Heart right ventricle (tissue), 16 donors: ENCODE measurements at regions of chr6 and their contacts with region 1.

Region 1: DNA sequence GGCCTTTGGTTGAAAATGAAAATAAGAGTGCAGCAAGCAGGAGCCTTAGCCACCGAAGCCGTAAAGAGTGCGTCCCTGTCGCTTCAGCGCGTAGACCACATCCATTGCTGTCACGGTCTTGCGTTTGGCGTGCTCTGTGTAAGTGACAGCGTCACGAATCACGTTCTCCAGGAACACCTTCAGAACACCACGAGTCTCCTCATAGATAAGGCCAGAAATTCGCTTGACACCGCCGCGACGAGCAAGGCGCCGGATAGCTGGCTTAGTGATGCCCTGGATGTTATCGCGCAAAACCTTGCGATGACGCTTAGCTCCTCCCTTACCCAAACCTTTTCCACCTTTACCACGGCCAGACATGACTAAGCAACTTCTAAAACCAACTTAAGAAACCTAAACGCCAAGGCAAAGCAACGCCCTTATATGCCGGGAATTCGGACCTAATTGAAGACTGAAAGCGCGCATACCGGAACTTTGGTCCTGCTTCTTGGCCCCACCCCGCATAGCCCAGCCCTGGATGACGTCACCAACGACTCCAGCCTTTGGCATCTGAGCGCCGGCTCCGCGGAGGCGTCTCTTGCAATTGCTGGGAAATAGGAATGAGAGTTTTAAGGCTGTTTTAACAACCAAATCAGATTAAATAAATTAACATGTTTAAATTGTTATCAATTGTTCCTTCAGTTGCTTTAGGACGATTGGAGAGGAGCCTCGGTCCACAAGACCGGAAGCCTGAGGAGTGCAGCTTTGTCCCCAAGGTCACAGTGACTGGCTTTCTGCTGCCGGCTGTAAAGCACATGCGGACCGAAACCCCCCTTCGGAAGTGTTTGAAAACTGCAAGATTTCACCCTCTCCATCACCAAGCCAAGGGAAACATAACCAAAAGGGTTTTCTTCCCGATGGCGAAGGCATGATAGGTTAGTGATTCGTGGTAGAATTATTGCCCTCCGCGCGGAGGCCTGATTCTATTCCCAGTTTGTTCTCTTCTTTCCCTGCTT is 79.6 kb upstream of the BTN3A2 start:
- DNase-seq: peak; percentile 92 to 99
- ATAC-seq: peak; percentile 93 to 97 (median 96)
- H3K4me3 ChIP-seq: peak overlapping the region; percentile 29 to 78 (median 65)
- H3K27ac ChIP-seq: peak overlapping the region; percentile 87 to 96 (median 92)
- H3K4me1 ChIP-seq: peaks cover 0 to 22% (median 14%) of the 10 kb centered on the region in 9 donors
- H3K27me3 ChIP-seq: no peaks in the 10 kb centered on the region
- CTCF ChIP-seq: no peak

Region 2: DNA sequence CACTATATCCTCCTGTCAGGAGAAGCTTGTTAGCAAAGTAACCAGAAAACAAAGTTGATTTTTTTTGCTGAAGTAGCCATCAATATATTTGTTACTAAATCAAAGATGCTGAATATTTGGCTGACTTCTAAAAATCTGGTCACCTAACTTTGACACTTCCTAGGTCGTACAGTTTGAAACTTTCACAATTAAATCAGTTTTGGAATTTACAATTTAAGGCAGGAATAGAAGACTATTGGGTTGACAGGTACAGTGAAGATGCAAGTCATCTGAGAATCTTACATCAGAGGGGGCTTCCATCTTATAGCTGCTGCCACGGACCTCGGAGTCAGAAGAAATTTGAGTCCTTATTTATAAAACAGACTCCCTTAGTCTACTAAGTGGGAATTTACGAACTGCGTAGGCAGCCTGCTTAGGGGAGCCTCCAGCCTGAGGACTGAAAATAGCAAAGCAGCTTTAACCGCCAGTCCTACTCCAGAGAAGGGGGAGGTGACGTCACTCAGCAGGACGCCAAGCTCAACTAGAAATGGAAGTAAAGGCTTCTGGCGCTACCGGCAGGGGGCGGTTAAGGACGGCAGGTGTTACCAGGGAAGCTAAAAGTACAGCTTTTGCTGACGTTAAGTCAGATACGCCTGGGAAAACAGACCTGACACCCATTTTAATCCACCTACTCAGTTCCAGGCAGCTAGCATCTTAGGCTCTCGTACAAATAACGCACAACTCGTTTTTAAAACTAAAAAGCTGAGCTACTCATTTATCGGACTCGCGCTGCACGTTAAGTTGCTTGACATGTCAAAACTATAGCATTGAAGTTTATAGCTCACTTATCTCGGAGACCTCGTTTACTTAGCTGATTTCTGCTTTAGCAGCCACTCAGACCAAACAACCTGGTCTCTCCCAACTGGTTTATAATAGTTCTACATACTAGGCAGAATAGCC is 259.3 kb before region 1 on chr6:
- intact Hi-C with region 1: loop called in 2 of 10 experiments (anchors 10 kb)
- DNase-seq: peak; percentile 90 to 96
- ATAC-seq: peak; percentile 65 to 83 (median 74)
- H3K4me3 ChIP-seq: peak overlapping the region; percentile 51 to 79 (median 68)
- H3K27ac ChIP-seq: peak overlapping the region; percentile 86 to 96 (median 91)
- H3K4me1 ChIP-seq: peaks cover 0 to 52% (median 10%) of the 10 kb centered on the region in 9 donors
- H3K27me3 ChIP-seq: no peaks in the 10 kb centered on the region
- CTCF ChIP-seq: peak; percentile 48 to 93 (median 83)

Region 3: GRCh38 chr6:26156076-26156849 is 129.2 kb before region 1 on chr6:
- intact Hi-C with region 1: loop called in 1 of 10 experiments (anchors 5 kb)
- DNase-seq: peak; percentile 90
- ATAC-seq: peak; percentile 85 to 92 (median 88)
- H3K4me3 ChIP-seq: peak overlapping the region; percentile 52 to 97 (median 79)
- H3K27ac ChIP-seq: peak overlapping the region; percentile 81 to 98 (median 94)
- H3K4me1 ChIP-seq: peaks cover 4 to 31% (median 21%) of the 10 kb centered on the region in 9 donors
- H3K27me3 ChIP-seq: no peaks in the 10 kb centered on the region
- CTCF ChIP-seq: peak in 2 of 9 donors; percentile 8 to 15

Region 4: DNA sequence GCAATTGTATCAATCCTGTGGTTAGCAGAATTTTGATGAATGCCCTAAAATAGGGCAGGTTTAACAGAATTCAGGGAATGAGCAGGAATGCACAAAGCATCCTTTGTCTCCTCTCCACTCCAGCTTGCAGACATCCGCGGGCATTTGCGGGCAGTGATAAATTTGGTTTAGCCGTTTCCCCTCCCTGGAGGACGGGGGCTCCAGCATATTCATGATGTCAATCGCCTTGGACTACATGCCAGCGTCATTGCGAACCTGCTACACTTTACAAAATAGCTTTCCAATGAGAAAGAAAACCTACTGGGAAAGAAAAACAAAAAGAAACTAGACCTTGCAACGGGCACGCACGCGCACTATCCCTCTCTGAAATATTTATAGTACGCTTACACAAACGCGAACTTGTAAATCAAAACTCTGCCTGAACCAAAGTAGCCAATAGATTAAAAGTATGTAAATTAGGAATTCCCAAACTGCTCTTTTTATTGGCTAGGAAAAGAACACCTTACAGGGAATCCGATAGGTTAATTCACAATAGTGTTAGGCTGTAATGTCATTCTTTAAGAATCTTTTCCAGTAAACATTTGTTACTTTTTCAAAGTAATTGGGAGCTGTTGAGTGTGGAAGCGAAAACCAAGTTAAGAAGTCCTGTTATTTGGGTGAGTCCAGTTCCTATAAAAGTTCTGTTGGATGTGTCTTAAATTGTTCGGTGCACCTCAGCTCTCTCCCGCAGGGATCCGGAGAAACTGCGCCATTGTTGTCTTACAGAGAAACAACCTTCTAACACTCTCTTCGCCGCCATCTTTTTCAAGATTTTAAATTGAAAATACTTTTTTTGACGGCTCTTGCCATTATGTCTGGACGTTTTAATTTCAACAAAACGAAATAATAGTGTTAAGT is 61.5 kb before region 1 on chr6:
- intact Hi-C with region 1: loop called in 3 of 10 experiments (anchors 5 to 10 kb)
- DNase-seq: peak in 1 of 2 donors; percentile 72
- ATAC-seq: peak; percentile 82 to 95 (median 92)
- H3K4me3 ChIP-seq: peak overlapping the region; percentile 7 to 65 (median 54)
- H3K27ac ChIP-seq: peak overlapping the region; percentile 69 to 93 (median 87)
- H3K4me1 ChIP-seq: peaks cover 0 to 20% (median 7%) of the 10 kb centered on the region in 9 donors
- H3K27me3 ChIP-seq: peaks cover 0 to 53% (median 12%) of the 10 kb centered on the region in 7 donors
- CTCF ChIP-seq: no peak

Region 5: GRCh38 chr6:26312501-26313390 is 27.3 kb after region 1 on chr6:
- intact Hi-C with region 1: loop called in 1 of 10 experiments (anchors 2 kb)
- DNase-seq: peak; percentile 59 to 83
- ATAC-seq: peak; percentile 66 to 95 (median 86)
- H3K4me3 ChIP-seq: peak overlapping the region; percentile 5 to 59 (median 50)
- H3K27ac ChIP-seq: peak overlapping the region in 6 of 10 donors; percentile 21 to 60 (median 52)
- H3K4me1 ChIP-seq: peaks cover 0 to 31% (median 7%) of the 10 kb centered on the region in 9 donors
- H3K27me3 ChIP-seq: peaks cover 0 to 15% (median 6%) of the 10 kb centered on the region in 7 donors
- CTCF ChIP-seq: no peak

Region 6: DNA sequence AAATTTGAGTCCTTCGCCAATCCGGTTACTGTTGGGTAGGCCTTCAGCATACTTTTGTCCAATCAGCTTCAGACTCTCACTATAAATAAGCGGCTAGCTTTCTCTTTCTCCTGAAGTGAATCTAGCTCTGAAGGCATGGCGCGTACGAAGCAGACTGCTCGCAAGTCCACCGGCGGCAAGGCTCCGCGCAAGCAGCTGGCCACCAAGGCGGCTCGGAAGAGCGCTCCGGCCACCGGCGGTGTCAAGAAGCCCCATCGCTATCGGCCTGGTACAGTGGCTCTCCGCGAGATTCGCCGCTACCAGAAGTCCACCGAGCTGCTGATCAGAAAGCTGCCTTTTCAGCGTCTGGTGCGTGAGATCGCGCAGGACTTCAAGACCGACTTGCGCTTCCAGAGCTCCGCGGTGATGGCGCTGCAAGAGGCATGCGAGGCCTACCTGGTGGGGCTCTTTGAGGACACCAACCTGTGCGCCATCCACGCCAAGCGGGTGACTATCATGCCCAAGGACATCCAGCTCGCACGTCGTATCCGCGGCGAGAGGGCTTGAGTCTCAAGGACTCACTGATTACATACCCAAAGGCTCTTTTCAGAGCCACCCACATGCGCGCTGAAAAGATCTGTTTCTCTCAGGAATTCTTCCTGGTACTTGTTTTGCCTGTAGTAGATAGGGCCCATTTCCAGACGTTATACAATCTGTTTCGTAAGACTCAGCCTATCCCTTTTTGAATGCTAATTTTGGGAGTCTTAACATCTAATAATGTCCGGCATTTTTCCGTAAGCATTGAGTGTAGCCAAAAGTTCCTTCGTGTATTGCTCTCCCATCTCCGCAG is 1524.7 kb after region 1 on chr6:
- intact Hi-C with region 1: loop called in 1 of 10 experiments (anchors 10 kb)
- DNase-seq: peak; percentile 54 to 78
- ATAC-seq: peak; percentile 81 to 86 (median 82)
- H3K4me3 ChIP-seq: peak overlapping the region; percentile 11 to 69 (median 61)
- H3K27ac ChIP-seq: peak overlapping the region in 9 of 10 donors; percentile 34 to 92 (median 75)
- H3K4me1 ChIP-seq: peaks cover 0 to 53% (median 9%) of the 10 kb centered on the region in 9 donors
- H3K27me3 ChIP-seq: peaks cover 6 to 95% (median 47%) of the 10 kb centered on the region in 7 donors
- CTCF ChIP-seq: peak in 1 of 9 donors; percentile 24